ENCODE measurements at regions of chr14 and their contacts with region 1.

Region 1: DNA sequence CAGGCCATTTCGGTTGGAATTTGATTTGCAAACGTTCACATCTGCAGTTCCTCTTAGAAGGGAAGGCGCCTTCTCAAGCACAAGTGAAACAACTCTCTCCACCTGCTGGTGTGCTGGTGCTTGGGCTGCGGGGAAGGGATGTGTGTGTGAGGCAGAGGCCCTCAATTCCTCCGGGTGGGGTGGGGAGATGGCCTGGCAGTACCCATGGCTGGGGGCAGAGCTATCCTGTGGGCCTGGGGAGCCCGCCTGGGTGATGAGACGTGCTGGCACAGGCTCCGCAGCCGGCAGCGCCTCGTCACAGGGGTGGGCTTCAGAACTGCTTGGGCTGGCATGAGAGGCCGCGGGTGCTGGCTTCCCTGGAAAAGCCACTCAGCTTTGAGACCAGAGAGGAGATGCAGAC is 28.9 kb upstream of the TDRD9 start:
- DNase-seq: no peak
- H3K4me3 ChIP-seq: no peak overlapping the region
- H3K27ac ChIP-seq: no peak overlapping the region
- H3K4me1 ChIP-seq: peaks cover 2% of the 10 kb centered on the region
- H3K27me3 ChIP-seq: no peaks in the 10 kb centered on the region
- CTCF ChIP-seq: no peak
- POLR2A ChIP-seq: no peak

Region 2: DNA sequence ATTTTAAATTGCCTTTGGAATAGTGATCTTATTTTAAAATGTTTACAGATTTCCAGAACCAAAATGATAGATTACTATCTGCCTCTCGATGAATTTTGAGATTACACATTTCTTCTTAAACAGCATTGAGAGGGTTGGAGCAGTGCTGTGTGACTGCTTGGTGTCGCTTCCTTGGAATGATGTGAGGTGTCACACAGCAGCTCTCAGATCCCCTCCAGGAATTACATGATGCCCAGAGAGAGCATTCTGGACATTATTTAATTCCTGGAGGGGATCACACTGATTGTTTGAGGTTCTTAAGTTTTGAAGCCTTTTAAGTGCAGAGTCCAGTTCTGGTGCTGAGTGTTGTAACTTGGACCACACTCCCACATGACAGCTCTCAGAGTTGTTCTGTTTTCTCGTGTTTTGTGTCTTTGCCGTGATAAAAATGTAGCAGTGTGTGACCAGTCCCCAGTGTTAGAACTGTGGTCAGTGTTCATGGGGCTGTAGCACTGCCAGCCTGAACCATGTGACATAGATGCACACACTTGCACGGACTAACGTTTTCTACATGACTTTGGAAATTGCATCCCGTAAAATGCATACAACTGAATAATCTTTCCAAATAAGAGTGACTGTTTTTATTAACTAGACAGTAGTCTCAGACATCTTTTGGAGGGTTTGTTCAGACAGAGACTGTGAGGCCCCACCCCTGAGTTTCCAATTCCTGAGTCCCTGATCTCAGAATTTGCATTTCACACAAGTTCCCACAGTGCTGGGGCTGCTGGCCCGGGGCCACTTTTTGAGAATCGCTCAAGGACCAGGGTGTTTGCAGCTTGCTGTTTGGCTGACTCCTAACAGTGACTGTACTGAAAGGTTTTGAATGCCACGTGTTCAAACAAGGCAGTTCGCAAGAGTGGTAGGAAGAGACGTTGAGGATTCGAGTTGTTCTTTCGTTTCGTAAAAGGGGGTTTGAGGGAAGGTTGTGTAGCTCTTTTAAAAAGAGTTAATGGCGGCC is 210.1 kb before region 1 on chr14:
- CTCF ChIA-PET with region 1: no interaction called
- POLR2A ChIA-PET with region 1: no interaction called
- dilution Hi-C with region 1: no loop called
- intact Hi-C with region 1: no loop called
- DNase-seq: no peak
- H3K4me3 ChIP-seq: no peak overlapping the region
- H3K27ac ChIP-seq: no peak overlapping the region
- H3K4me1 ChIP-seq: no peaks in the 10 kb centered on the region
- H3K27me3 ChIP-seq: no peaks in the 10 kb centered on the region
- CTCF ChIP-seq: no peak
- POLR2A ChIP-seq: no peak

Region 3: GRCh38 chr14:103819503-103820307 is 79.6 kb before region 1 on chr14:
- CTCF ChIA-PET with region 1: interaction called, 18 read pairs
- POLR2A ChIA-PET with region 1: no interaction called
- dilution Hi-C with region 1: no loop called
- intact Hi-C with region 1: no loop called
- DNase-seq: peak; percentile 30
- H3K4me3 ChIP-seq: no peak overlapping the region
- H3K27ac ChIP-seq: no peak overlapping the region
- H3K4me1 ChIP-seq: peaks cover 11% of the 10 kb centered on the region
- H3K27me3 ChIP-seq: no peaks in the 10 kb centered on the region
- CTCF ChIP-seq: no peak
- POLR2A ChIP-seq: no peak

Region 4: GRCh38 chr14:103847451-103848188 is 51.7 kb before region 1 on chr14 and contains the start of gene PPP1R13B:
- CTCF ChIA-PET with region 1: interaction called, 19 read pairs
- POLR2A ChIA-PET with region 1: no interaction called
- dilution Hi-C with region 1: no loop called
- intact Hi-C with region 1: loop called (anchors 1 kb)
- DNase-seq: peak; percentile 82
- H3K4me3 ChIP-seq: peak within 1 kb of the TSS; percentile 45 to 83 (median 77)
- H3K27ac ChIP-seq: no peak within 1 kb of the TSS
- H3K4me1 ChIP-seq: peaks cover 15% of the 10 kb centered on the region
- H3K27me3 ChIP-seq: no peaks in the 10 kb centered on the region
- CTCF ChIP-seq: no peak
- POLR2A ChIP-seq: peak; percentile 45
- total RNA-seq, gene PPP1R13B: 29.3 and 30.0 TPM in 2 replicates

Region 5: GRCh38 chr14:103871596-103872480 is 27.5 kb before region 1 on chr14:
- CTCF ChIA-PET with region 1: interaction called, 17 read pairs
- POLR2A ChIA-PET with region 1: no interaction called
- dilution Hi-C with region 1: no loop called
- intact Hi-C with region 1: no loop called
- DNase-seq: no peak
- H3K4me3 ChIP-seq: no peak overlapping the region
- H3K27ac ChIP-seq: peak overlapping the region; percentile 8
- H3K4me1 ChIP-seq: peaks cover 11% of the 10 kb centered on the region
- H3K27me3 ChIP-seq: no peaks in the 10 kb centered on the region
- CTCF ChIP-seq: no peak
- POLR2A ChIP-seq: no peak

Region 6: DNA sequence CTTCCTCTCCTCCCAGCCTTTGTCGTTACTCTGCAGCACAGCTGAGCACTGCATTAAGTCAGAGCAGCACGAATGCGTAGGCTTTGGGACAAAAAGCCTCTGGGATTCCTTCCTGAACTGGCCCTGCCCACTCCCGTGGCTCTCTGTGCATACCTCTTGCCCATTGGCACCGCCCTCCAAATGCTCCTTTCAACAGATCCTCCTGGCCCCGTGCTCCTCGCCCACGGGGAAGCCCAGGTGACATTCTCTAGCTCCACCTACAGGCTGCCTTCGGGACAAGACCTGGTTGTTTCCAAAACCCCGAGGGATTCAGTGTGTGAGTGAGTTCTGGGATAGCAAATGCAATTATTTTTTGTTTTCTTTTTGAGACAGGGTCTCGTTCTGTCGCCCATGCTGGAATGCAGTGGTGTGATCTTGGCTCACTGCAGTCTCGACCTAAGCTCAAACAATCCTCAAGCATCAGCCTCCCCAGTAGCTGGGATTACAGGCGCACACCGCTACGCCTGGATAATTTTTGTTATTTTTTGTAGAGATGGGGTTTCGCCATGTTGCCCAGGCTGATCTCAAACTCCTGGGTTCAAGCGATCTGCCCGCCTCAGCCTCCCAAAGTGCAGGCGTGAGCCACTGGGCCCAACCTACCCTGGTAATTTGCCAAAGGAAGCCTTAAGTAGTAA is 11.1 kb after region 1 on chr14:
- CTCF ChIA-PET with region 1: interaction called, 63 read pairs
- POLR2A ChIA-PET with region 1: no interaction called
- dilution Hi-C with region 1: no loop called
- intact Hi-C with region 1: no loop called
- DNase-seq: peak; percentile 75
- H3K4me3 ChIP-seq: no peak overlapping the region
- H3K27ac ChIP-seq: no peak overlapping the region
- H3K4me1 ChIP-seq: peaks cover 4% of the 10 kb centered on the region
- H3K27me3 ChIP-seq: no peaks in the 10 kb centered on the region
- CTCF ChIP-seq: peak; percentile 85
- POLR2A ChIP-seq: no peak

Region 7: DNA sequence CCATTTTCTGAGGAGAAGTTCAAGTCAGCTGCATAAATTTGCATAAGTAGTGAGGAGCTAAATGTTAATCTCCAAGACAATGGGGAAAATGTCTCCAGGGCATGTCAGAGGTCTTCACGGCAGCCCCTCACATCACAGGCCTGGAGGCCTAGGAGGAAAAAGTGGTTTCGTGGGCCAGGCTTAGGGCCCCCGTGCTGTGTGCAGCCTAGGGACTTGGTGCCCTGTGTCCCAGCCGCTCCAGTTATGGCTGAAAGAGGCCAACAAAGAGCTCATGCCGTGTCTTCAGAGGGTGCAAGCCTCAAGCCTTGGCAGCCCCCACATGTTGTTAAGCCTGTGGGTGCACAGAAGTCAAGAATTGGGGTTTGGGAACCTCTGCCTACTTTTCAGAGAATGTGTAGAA is 84.9 kb after region 1 on chr14:
- CTCF ChIA-PET with region 1: interaction called, 27 read pairs
- POLR2A ChIA-PET with region 1: no interaction called
- dilution Hi-C with region 1: no loop called
- intact Hi-C with region 1: no loop called
- DNase-seq: no peak
- H3K4me3 ChIP-seq: no peak overlapping the region
- H3K27ac ChIP-seq: no peak overlapping the region
- H3K4me1 ChIP-seq: no peaks in the 10 kb centered on the region
- H3K27me3 ChIP-seq: peaks cover 0 to 3% of the 10 kb centered on the region in 2 experiments
- CTCF ChIP-seq: no peak
- POLR2A ChIP-seq: no peak